ENCODE measurements at regions of chr3 and their contacts with region 1.

Region 1: GRCh38 chr3:111610189-111610588 is 15.0 kb upstream of the ZBED2 start:
- DNase-seq: peak in 9 of 10 donors; percentile 25 to 90 (median 76)
- ATAC-seq: peak; percentile 92 to 96
- H3K4me3 Mint-ChIP-seq: peak overlapping the region in 9 of 10 donors; percentile 60 to 83 (median 75)
- H3K27ac Mint-ChIP-seq: peak overlapping the region; percentile 60 to 97 (median 89)
- H3K4me1 Mint-ChIP-seq: peaks cover 32 to 67% (median 61%) of the 10 kb centered on the region in 4 donors
- H3K27me3 Mint-ChIP-seq: no peaks in the 10 kb centered on the region

Region 2: DNA sequence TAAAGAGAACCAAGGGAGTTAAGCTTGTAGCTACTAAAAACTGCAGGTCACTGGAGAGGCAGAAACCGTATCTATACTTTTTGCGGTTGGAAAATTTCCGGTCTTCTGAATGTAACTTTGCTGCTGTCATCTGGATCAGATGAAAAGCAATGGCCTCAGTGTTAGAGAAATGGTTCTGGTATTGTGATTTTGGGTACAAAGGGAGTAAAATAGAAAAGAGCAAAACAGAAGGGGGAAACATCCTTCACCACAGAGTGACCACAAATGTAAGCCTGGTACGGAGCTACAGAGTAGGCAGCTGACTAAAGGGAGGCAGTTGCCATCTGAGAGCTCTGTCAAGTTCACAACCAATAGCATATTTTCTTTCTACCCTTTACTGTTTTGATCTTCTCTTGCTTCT is 62.6 kb before region 1 on chr3:
- POLR2A ChIA-PET with region 1: interaction called, 10 read pairs
- DNase-seq: peak; percentile 22 to 90 (median 73)
- ATAC-seq: peak; percentile 87 to 89
- H3K4me3 Mint-ChIP-seq: no peak overlapping the region
- H3K27ac Mint-ChIP-seq: no peak overlapping the region
- H3K4me1 Mint-ChIP-seq: peaks cover 0 to 40% (median 34%) of the 10 kb centered on the region in 4 donors
- H3K27me3 Mint-ChIP-seq: no peaks in the 10 kb centered on the region

Region 3: GRCh38 chr3:111681661-111682426 is 71.7 kb after region 1 on chr3:
- POLR2A ChIA-PET with region 1: no interaction called
- DNase-seq: no peak
- ATAC-seq: no peak
- H3K4me3 Mint-ChIP-seq: peak overlapping the region in 1 of 10 donors; percentile 2
- H3K27ac Mint-ChIP-seq: peak overlapping the region in 5 of 10 donors; percentile 11 to 69 (median 23)
- H3K4me1 Mint-ChIP-seq: peaks cover 37 to 80% (median 72%) of the 10 kb centered on the region in 4 donors
- H3K27me3 Mint-ChIP-seq: no peaks in the 10 kb centered on the region